ENCODE measurements at regions of chr14 and their contacts with region 1.

Region 1: GRCh38 chr14:22822571-22823098 is 7.1 kb upstream of the MRPL52 start:
- DNase-seq: peak; percentile 91
- H3K4me3 ChIP-seq: peak overlapping the region; percentile 14 to 57 (median 32)
- H3K27ac ChIP-seq: peak overlapping the region; percentile 68
- H3K4me1 ChIP-seq: peaks cover 47% of the 10 kb centered on the region
- H3K27me3 ChIP-seq: no peaks in the 10 kb centered on the region
- CTCF ChIP-seq: peak; percentile 86 to 88
- POLR2A ChIP-seq: no peak

Region 2: GRCh38 chr14:22556990-22557623 is 265.5 kb before region 1 on chr14:
- CTCF ChIA-PET with region 1: interaction called, 23 read pairs
- POLR2A ChIA-PET with region 1: no interaction called
- dilution Hi-C with region 1: no loop called
- intact Hi-C with region 1: loop called (anchors 1 kb)
- DNase-seq: peak; percentile 71
- H3K4me3 ChIP-seq: peak overlapping the region in 2 of 3 experiments; percentile 10 to 14
- H3K27ac ChIP-seq: peak overlapping the region; percentile 88
- H3K4me1 ChIP-seq: peaks cover 52% of the 10 kb centered on the region
- H3K27me3 ChIP-seq: no peaks in the 10 kb centered on the region
- CTCF ChIP-seq: peak; percentile 84 to 99
- POLR2A ChIP-seq: no peak

Region 3: DNA sequence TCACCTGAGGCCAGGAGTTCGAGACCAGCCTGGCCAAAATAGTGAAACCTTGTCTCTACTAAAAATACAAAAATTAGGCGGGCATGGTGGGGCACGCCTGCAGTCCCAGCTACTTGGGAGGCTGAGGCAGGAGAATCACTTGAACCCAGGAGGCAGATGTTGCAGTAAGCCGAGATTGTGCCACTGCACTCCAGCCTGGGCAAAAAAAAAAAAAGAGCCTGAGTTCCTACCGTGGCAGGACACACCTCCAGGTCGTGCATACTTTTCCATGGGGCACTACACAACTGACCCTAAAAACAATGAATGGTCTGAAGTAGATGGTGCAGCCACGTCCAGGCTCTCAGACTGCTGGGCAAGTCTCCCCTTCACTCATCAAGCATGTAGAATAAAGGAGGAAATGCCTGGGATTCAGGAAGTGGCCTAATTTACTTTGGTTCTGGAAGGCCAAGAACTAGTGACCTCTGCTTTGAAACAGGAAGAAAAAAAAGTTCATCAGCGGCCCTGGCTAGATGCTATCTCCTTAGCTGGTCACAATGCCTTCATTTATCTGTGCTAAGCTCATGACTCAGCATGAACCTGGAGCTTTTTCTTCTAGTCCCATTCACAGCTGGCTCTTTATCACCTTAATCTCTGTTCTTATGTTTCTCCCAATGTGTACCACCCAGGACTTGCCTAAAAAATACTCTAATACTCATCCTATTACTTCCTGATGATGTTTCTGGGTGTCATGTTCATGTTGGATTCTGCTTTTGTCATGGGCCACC is 122.7 kb before region 1 on chr14:
- CTCF ChIA-PET with region 1: no interaction called
- POLR2A ChIA-PET with region 1: no interaction called
- dilution Hi-C with region 1: no loop called
- intact Hi-C with region 1: loop called (anchors 2 kb)
- DNase-seq: peak; percentile 80
- H3K4me3 ChIP-seq: no peak overlapping the region
- H3K27ac ChIP-seq: peak overlapping the region; percentile 57
- H3K4me1 ChIP-seq: peaks cover 23% of the 10 kb centered on the region
- H3K27me3 ChIP-seq: no peaks in the 10 kb centered on the region
- CTCF ChIP-seq: no peak
- POLR2A ChIP-seq: peak; percentile 62

Region 4: DNA sequence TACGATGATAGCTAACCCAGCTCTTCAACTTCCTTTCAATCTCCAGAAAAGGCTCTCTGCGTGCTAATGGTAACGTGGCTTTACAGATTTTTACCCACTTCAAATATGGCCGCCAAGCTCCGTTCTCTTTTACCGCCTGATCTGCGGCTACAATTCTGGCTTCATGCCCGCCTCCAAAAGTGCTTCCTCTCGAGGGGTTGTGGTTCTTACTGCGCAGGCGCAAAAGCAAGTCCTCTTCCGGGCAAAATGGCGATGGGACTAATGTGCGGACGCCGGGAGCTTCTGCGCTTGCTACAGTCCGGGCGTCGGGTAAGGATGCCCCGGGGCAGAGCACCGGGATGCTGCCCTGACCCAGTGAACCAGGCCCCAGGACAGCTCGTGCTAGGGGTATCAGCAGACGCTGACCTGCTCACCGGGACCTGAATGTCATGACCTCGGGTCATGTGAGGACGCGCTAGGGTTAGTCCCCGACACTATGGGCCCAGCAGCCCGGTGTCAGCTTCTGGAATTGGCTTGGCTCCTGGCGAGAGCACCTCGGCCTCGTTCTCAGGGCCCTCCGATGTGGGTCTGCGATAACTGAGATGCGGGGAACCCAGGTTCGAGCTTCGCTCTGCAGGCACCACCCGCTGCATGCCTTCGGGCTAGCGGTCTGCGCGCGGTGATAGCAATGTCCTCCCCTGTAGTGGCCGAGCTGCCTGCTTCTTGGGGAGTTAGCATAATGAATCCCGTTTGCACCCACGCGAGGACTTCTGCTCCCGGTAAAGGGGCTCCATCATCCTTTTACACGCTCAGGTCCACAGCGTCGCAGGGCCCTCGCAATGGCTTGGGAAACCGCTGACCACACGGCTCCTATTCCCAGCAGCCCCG is 55.9 kb before region 1 on chr14 and contains the start of gene OXA1L:
- CTCF ChIA-PET with region 1: interaction called, 11 read pairs
- POLR2A ChIA-PET with region 1: interaction called, 3 read pairs
- dilution Hi-C with region 1: no loop called
- intact Hi-C with region 1: loop called (anchors 2 kb)
- DNase-seq: peak; percentile 98
- H3K4me3 ChIP-seq: peak within 1 kb of the TSS; percentile 77 to 99 (median 92)
- H3K27ac ChIP-seq: peak within 1 kb of the TSS; percentile 84
- H3K4me1 ChIP-seq: peaks cover 24% of the 10 kb centered on the region
- H3K27me3 ChIP-seq: no peaks in the 10 kb centered on the region
- CTCF ChIP-seq: no peak
- POLR2A ChIP-seq: peak; percentile 81
- total RNA-seq, gene OXA1L: 200 and 212 TPM in 2 replicates

Region 5: DNA sequence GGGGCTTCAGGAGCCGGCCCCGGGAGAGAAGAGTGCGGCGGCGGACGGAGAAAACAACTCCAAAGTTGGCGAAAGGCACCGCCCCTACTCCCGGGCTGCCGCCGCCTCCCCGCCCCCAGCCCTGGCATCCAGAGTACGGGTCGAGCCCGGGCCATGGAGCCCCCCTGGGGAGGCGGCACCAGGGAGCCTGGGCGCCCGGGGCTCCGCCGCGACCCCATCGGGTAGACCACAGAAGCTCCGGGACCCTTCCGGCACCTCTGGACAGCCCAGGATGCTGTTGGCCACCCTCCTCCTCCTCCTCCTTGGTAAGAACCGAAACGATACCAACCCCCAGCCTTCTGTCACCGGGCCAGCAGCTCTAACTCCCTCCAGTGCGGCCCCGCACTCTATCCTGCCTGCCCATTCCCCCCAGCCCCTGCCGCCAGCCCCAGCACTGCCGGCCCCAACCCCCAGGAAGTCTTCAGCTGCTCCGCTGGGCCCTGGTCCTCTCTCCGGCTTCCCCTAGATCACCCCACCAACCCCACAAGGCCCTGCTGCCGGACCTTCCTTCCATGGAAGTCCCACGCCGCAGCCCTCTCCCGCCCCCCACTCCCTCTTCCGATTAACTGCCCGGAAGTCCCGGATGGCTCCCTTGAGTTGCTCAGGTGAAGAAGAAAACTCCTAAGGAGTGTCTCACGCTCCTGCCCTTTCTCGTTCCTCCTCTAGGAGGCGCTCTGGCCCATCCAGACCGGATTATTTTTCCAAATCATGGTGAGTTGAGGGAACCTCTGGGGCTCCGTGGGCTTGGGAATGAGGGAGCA is 49.6 kb after region 1 on chr14:
- CTCF ChIA-PET with region 1: interaction called, 14 read pairs
- POLR2A ChIA-PET with region 1: no interaction called
- dilution Hi-C with region 1: no loop called
- intact Hi-C with region 1: no loop called
- DNase-seq: peak; percentile 87
- H3K4me3 ChIP-seq: peak overlapping the region; percentile 68 to 78 (median 76)
- H3K27ac ChIP-seq: peak overlapping the region; percentile 89
- H3K4me1 ChIP-seq: peaks cover 18% of the 10 kb centered on the region
- H3K27me3 ChIP-seq: no peaks in the 10 kb centered on the region
- CTCF ChIP-seq: peak; percentile 90 to 97
- POLR2A ChIP-seq: peak; percentile 59

Region 6: GRCh38 chr14:22918804-22919600 is 96.4 kb after region 1 on chr14 and contains the start of gene RBM23:
- CTCF ChIA-PET with region 1: interaction called, 4 read pairs
- POLR2A ChIA-PET with region 1: no interaction called
- dilution Hi-C with region 1: no loop called
- intact Hi-C with region 1: loop called (anchors 2 kb)
- DNase-seq: peak; percentile 100
- H3K4me3 ChIP-seq: peak within 1 kb of the TSS; percentile 70 to 90 (median 84)
- H3K27ac ChIP-seq: peak within 1 kb of the TSS; percentile 96
- H3K4me1 ChIP-seq: peaks cover 12% of the 10 kb centered on the region
- H3K27me3 ChIP-seq: no peaks in the 10 kb centered on the region
- CTCF ChIP-seq: no peak
- POLR2A ChIP-seq: peak; percentile 67
- total RNA-seq, gene RBM23: 61.0 and 68.9 TPM in 2 replicates

Measured in endothelial cell of umbilical vein (primary cell).